Natural killer cell (primary cell): ENCODE measurements at regions of chr17 and their contacts with region 1.

Region 1: DNA sequence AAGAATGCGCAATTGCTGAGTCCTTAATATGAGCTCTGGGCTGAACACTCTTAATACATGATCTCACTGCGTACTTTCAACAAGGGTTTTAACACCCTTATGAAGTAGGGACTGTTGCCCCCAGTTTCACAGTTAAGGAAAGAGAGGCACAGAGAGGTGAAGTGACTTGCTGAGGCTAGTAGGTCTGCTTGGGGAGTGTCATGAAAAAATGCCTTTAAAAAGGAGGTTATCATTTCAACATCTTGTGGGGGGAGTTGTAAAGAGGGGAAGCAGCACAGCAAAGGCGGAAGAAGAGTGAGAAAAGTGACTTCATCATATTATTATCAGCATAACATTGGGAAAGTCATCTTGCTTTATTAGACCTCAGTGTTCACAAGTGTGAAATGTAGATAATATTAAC is 2.1 kb downstream of the CCL4L2 start:
- DNase-seq: peak in 1 of 2 donors; percentile 48
- ATAC-seq: peak; percentile 38 to 53 (median 49)
- H3K4me3 ChIP-seq: no peak overlapping the region
- H3K4me3 Mint-ChIP-seq: peak overlapping the region; percentile 78
- H3K27ac ChIP-seq: no peak overlapping the region
- H3K27ac Mint-ChIP-seq: peak overlapping the region; percentile 87 to 91
- H3K4me1 ChIP-seq: peaks cover 73% of the 10 kb centered on the region
- H3K4me1 Mint-ChIP-seq: peaks cover 80 to 82% of the 10 kb centered on the region in 2 donors
- H3K27me3 ChIP-seq: peaks cover 2% of the 10 kb centered on the region
- H3K27me3 Mint-ChIP-seq: no peaks in the 10 kb centered on the region
- CTCF ChIP-seq: no peak

Region 2: GRCh38 chr17:35889818-35890763 is 322.9 kb before region 1 on chr17:
- intact Hi-C with region 1: loop called (anchors 5 kb)
- DNase-seq: peak in 1 of 2 donors; percentile 62
- ATAC-seq: peak; percentile 21 to 51 (median 32)
- H3K4me3 ChIP-seq: no peak overlapping the region
- H3K4me3 Mint-ChIP-seq: peak overlapping the region; percentile 80
- H3K27ac ChIP-seq: peak overlapping the region; percentile 76
- H3K27ac Mint-ChIP-seq: peak overlapping the region; percentile 97 to 98
- H3K4me1 ChIP-seq: peaks cover 79% of the 10 kb centered on the region
- H3K4me1 Mint-ChIP-seq: peaks cover 67 to 82% of the 10 kb centered on the region in 2 donors
- H3K27me3 ChIP-seq: no peaks in the 10 kb centered on the region
- H3K27me3 Mint-ChIP-seq: no peaks in the 10 kb centered on the region
- CTCF ChIP-seq: no peak

Region 3: DNA sequence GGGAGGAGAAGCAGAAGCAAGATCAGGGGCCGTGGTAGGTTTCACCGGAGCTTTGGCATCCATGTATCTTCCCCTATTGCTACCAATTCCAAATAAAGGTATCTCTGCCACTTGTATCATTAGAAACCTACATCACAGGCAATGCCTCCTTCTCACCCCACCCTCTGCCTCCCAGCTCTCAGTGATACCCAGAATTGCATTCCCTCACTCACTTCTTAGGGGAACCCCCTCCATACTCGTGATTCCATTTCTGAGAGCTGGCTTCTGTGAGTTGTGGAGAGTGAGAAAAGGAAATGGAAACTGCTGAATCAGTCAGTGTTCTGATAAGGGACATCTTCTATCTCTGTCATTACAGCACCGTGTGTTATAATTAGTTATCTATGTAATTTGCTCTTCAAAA is 120.7 kb before region 1 on chr17:
- intact Hi-C with region 1: no loop called
- DNase-seq: peak in 1 of 2 donors; percentile 44
- ATAC-seq: peak in 2 of 3 donors; percentile 20 to 21
- H3K4me3 ChIP-seq: no peak overlapping the region
- H3K4me3 Mint-ChIP-seq: peak overlapping the region; percentile 40
- H3K27ac ChIP-seq: no peak overlapping the region
- H3K27ac Mint-ChIP-seq: peak overlapping the region; percentile 90 to 100
- H3K4me1 ChIP-seq: peaks cover 59% of the 10 kb centered on the region
- H3K4me1 Mint-ChIP-seq: peaks cover 89 to 94% of the 10 kb centered on the region in 2 donors
- H3K27me3 ChIP-seq: no peaks in the 10 kb centered on the region
- H3K27me3 Mint-ChIP-seq: no peaks in the 10 kb centered on the region
- CTCF ChIP-seq: no peak

Region 4: DNA sequence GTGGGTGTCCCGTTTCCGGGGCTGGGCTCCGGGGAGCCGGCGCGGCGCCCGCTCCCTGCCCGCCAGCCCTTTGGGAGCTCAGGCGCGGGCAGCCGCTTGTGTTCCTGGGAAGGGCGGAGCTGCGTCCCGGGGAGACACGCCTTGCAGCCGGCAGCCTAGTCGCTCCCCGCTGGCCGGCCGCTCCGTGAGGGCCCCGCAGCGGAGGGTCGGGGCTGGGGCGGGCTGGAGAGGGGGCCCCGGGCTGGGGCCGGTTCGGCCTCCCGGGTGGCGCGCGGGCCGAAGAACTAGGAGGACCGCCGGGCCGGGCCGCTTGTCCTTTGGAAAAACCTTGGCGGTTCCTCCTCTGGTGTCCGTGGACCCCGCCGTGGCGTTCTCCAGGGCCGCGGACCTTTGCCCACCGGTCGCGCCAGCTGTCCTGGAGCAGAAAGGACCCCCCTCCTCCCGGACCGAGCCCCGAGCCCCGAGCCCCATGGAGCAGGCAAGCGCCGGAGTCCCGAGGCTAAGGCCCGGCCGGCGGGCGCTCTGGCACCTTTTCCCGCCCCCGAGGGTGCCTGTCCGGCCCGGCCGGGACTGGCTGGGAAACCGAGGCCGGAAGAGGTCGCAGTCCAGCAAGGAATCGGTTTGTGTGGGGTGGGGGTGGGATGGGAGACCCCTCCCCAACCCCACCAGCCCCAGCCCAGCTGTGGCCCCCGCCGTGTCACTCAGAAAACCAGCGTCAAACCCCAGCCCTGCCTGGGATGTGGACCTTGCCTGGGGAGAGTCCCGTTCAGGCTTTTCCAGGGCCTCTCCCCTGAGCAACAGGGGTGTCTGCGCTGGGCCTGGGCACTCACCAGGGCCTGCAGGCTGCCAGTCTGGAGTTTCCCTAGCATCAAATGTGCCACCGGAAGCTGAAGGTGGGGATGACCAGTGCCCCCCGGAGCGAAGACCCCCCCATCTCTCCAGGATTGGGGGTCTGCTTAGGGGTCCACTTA is 29.7 kb before region 1 on chr17:
- intact Hi-C with region 1: loop called (anchors 5 kb)
- DNase-seq: peak; percentile 62 to 68
- ATAC-seq: peak; percentile 58 to 61 (median 59)
- H3K4me3 ChIP-seq: peak overlapping the region; percentile 28
- H3K4me3 Mint-ChIP-seq: peak overlapping the region; percentile 92
- H3K27ac ChIP-seq: no peak overlapping the region
- H3K27ac Mint-ChIP-seq: peak overlapping the region; percentile 93 to 98
- H3K4me1 ChIP-seq: peaks cover 62% of the 10 kb centered on the region
- H3K4me1 Mint-ChIP-seq: peaks cover 48 to 73% of the 10 kb centered on the region in 2 donors
- H3K27me3 ChIP-seq: peaks cover 9% of the 10 kb centered on the region
- H3K27me3 Mint-ChIP-seq: no peaks in the 10 kb centered on the region
- CTCF ChIP-seq: no peak